AG04449 (cell line): ENCODE measurements at regions of chr5 and their contacts with region 1.

Region 1: DNA sequence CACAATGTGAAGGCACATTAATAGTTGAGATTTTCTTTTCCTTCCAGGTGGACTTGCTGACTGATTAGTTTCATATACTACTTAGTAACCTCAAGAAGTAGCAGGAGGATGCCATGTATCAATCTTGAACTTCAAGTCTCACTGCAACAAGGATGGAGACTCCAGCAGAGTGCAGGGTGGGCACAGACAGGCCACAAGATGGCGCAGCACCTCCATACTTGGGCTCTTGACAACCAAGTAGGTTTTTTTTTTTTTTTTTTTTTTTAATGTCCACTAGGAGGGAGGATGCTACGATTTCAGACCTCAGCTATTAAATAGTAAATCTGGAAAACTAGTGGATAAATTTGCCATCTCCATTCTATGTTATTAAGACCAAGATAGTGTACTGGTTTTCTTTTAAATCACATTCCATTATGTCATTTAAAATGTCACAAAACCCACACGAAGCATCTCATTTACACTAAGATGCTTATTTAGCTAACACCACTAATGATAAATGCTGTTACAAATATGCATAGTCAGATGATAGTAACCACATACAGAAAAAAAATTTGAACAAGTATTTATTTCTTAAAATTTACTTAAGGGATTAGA is 58.6 kb downstream of the IL6ST start:
- DNase-seq: peak; percentile 38
- H3K4me3 ChIP-seq: no peak overlapping the region
- CTCF ChIP-seq: peak; percentile 87

Region 2: DNA sequence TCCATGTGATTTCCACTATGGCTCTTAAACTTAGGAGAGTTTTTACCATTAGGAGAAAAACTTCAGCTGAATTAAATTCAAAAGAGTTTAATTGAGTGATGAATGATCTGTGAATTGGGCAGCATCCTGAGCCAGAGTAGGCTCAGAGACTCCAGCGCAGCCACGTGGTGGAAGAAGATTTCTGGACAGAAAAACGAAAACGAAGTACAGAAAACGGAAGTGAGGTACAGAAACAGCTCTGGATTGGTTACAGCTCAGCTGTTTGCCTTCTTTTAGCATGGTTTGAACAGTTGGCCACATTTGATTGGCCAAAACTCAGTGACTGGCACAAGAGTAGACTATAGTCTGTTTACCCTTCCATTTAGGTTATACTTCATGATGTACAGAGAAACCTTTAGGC is 332.3 kb before region 1 on chr5:
- CTCF ChIA-PET with region 1: no interaction called
- POLR2A ChIA-PET with region 1: no interaction called
- DNase-seq: no peak
- H3K4me3 ChIP-seq: no peak overlapping the region
- CTCF ChIP-seq: no peak

Region 3: DNA sequence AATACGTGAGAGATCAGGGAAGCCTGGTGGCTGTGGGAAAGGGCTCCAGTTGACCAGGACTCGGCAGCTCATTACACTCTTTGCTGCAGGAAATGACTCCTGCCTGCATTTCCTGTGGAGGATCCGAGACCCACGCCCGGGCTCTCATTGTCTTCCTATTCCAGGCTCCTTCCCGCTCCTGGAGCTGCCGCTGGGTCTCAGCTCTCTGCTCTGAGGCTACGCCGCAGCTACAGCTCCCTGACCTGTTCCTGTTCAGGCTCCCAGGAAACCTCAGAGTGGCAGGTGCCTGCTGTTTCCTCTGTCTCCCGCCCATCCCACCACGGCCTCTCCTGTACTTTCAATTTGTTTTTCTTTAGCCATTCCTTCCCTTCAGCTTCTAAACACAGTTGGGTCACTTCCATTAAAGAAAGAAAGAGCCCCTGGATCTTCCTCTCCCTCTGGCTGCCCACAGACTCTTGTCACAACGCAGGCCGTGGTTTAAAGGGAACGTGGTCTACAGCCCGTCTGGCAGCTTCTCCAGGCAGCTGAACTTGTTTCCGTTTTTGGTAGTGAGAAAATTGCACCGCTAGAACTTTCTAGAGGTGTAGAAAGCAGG is 12.9 kb before region 1 on chr5:
- CTCF ChIA-PET with region 1: interaction called, 33 read pairs
- POLR2A ChIA-PET with region 1: no interaction called
- DNase-seq: no peak
- H3K4me3 ChIP-seq: peak overlapping the region; percentile 6; the same call in 1 of the 2 replicates
- CTCF ChIP-seq: no peak

Region 4: GRCh38 chr5:56175488-56175887 is 239.3 kb after region 1 on chr5:
- CTCF ChIA-PET with region 1: interaction called, 12 read pairs
- POLR2A ChIA-PET with region 1: no interaction called
- DNase-seq: peak; percentile 42
- H3K4me3 ChIP-seq: no peak overlapping the region
- CTCF ChIP-seq: no peak

Region 5: DNA sequence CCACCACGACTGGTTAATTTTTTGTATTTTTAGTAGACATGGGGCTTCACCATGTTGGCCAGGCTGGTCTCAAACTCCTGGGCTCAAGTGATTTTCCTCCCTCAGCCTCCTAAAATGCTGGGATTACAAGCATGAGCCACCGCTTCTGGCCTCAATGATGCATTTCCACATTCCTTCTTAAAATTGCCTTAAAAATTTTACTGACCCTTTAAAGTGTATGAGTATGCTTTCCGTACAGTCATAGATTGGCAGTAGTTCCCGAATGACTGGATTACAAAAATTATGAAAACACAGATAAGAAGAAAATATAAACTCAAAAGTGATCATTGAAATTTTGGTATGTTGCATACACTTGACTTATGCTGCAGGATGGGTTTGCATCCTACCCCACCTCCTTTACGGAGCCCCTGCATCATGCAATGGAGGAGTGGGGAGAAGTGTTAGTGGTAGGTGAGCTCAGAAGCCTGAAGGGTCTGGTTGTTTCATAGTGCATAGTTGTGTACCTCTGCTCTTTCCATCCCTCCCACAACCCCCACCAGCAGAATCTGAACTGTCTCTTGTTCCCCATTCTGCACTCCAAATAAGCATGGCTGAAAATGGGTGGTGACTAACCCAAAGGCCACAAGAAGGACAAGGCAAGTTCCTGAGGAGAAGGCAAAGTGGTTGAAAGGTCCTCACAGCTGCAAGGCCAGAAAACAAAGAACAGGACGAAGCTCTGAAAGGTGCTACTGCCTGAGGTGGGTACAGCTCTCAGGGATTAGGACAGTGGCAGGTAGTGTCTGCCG is 270.1 kb after region 1 on chr5:
- CTCF ChIA-PET with region 1: interaction called, 121 read pairs
- POLR2A ChIA-PET with region 1: no interaction called
- DNase-seq: peak; percentile 37
- H3K4me3 ChIP-seq: no peak overlapping the region
- CTCF ChIP-seq: no peak

Region 6: GRCh38 chr5:56838409-56839039 is 902.3 kb after region 1 on chr5:
- CTCF ChIA-PET with region 1: interaction called, 21 read pairs
- POLR2A ChIA-PET with region 1: no interaction called
- DNase-seq: peak; percentile 47
- H3K4me3 ChIP-seq: peak overlapping the region; percentile 21
- CTCF ChIP-seq: peak; percentile 37